ENCODE measurements at regions of chr15 and their contacts with region 1.

Region 1: DNA sequence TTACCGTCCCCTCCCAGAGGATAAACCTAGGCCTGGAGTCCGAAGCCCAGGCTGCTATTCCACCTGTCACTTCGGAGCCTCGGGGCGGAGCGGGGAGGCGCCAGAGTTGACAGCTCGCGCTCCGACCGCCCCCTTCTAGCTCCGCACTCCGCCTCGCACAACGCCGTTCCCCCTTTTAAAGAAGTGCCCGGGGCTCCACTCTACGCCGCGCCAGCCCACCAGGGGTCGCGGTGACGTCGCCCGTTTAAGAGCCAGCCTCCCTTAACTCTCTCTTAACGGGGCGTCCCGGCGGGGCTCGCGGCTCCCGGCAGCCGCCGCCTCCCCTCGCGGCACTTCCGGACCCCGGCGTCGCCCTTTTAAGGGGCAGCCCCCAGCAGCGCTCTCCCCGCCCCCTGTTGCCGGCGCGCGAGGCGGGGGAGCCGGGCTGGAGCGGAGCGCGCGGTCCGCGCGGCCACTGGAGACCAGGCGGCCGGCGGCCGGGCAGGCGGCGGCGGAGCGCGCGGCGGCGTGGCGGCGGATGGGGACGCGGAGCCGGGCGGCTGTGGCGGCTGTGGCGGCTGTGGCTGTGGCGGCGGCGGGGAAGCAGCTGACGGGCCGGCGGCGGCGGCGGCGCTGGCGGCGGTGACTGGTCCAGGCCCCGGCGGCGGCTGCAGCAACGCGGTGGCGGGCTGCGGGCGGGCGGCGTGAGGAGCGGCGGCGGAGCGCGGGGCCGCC is at the start of gene INAFM2:
- DNase-seq: peak; percentile 90
- H3K4me3 ChIP-seq: peak within 1 kb of the TSS; percentile 61 to 77 (median 64)
- H3K27ac ChIP-seq: no peak within 1 kb of the TSS
- H3K4me1 ChIP-seq: peaks cover 46% of the 10 kb centered on the region
- H3K27me3 ChIP-seq: no peaks in the 10 kb centered on the region
- CTCF ChIP-seq: peak; percentile 6 to 34
- total RNA-seq, gene INAFM2: 25.5 to 28.0 TPM

Region 2: DNA sequence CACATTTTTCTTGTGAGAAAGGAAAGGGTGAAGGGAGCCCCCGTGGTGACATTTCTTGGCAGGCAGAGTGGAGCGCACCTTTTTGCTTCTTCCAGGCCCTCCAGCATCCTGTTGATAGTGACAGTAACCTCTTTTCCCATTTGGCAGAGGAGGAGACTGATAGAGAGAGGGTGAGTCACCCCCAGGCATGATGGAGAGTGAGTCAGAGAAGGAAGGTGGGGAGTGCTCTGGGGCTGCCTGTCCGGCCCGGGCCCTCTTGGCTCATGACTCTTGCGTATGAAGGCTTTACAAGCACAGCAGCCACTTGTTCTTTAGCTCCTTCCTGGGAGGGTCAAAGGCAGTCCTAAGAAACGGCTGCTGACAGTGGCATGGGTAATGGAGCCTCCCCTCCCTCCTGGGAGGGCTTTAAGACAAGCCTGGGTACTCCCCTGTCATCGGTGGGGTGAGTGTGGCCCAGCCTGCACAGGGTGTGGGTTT is 56.5 kb before region 1 on chr15:
- CTCF ChIA-PET with region 1: no interaction called
- dilution Hi-C with region 1: loop called (anchors 5 kb)
- in situ Hi-C with region 1: no loop called
- intact Hi-C with region 1: no loop called
- DNase-seq: peak; percentile 96
- H3K4me3 ChIP-seq: no peak overlapping the region
- H3K27ac ChIP-seq: no peak overlapping the region
- H3K4me1 ChIP-seq: peaks cover 11% of the 10 kb centered on the region
- H3K27me3 ChIP-seq: no peaks in the 10 kb centered on the region
- CTCF ChIP-seq: no peak

Region 3: DNA sequence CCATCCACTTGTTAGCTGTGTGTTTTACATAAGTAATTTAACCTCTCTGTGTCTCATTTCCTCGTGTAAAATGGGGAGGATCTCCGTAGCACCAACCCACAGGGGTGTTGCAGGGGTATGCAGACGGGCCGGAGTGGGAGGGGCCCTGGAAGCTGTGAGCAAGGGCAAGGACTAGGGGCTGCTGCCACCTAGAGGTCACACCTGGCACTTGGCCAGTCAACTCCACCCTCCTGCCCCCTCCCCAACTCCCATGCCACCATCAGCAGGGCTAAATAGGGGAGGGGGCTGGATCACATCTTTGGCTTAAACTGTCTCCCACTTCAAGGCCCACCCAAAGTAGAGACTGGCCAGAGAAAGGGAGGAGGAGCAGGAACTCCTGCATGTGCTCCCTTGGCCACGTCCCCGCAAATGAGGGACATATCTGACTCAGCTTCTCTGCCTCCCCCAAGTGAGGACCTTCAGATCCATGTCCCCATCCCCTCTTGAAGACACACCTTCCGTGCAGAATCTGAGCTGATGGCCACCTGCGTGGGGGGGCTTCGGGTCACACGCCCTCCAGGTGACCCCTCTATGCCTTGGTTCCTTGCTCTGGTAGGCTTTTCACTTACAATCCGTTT is 14.8 kb after region 1 on chr15:
- CTCF ChIA-PET with region 1: interaction called, 4 read pairs
- dilution Hi-C with region 1: no loop called
- in situ Hi-C with region 1: no loop called
- intact Hi-C with region 1: loop called (anchors 1 kb)
- DNase-seq: peak; percentile 66
- H3K4me3 ChIP-seq: peak overlapping the region in 2 of 3 experiments; percentile 1 to 81
- H3K27ac ChIP-seq: peak overlapping the region; percentile 68
- H3K4me1 ChIP-seq: peaks cover 75% of the 10 kb centered on the region
- H3K27me3 ChIP-seq: no peaks in the 10 kb centered on the region
- CTCF ChIP-seq: peak; percentile 63 to 86

Region 4: GRCh38 chr15:40367686-40368611 is 44.6 kb after region 1 on chr15:
- CTCF ChIA-PET with region 1: no interaction called
- dilution Hi-C with region 1: no loop called
- in situ Hi-C with region 1: no loop called
- intact Hi-C with region 1: loop called (anchors 1 kb)
- DNase-seq: peak; percentile 88
- H3K4me3 ChIP-seq: no peak overlapping the region
- H3K27ac ChIP-seq: no peak overlapping the region
- H3K4me1 ChIP-seq: peaks cover 19% of the 10 kb centered on the region
- H3K27me3 ChIP-seq: no peaks in the 10 kb centered on the region
- CTCF ChIP-seq: peak; percentile 60 to 64

Region 5: DNA sequence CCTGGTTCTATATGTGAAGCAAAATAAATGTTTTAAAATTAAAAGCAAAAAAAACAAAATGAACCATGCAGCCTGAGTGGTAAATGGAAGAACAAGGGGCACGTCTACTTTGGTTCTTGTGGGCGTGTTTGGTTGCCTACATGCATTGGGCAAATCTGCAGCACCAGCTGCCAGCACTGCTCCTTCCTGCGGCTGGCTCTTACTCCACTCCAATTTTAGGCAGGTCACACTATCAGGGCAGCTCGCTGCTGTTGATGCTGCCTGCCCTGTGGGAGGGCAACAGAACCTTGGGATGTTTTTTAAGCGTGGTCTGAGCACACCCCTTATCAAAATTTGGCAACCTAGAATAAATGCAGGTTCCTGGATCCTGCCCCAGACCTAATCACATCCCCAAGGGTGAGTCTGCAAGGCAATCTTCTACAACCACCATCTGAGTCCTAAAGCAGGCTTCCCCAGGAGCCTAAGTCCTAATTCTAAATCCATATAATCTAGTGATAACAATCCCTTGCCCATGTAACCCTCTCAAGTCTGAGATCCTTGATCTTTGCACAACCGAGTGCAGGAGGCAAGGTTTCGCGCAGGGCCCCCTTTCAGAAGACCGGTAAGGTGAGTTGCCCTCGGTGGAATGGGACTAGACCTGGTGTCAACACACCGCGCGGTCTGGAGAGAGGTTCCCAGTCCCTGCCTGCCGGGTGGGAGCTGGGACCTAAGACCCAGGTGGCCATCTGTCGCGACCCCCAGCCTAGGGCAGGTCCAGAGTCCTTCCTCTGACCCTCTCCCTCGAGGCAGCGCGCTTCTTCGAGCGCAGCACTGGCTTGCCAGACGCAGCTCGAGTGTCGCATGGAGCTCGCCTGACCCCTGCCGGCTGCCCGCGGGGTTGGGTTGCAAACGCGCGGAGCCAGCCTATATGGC is 98.1 kb after region 1 on chr15:
- CTCF ChIA-PET with region 1: no interaction called
- dilution Hi-C with region 1: no loop called
- in situ Hi-C with region 1: no loop called
- intact Hi-C with region 1: loop called (anchors 1 kb)
- DNase-seq: peak; percentile 57
- H3K4me3 ChIP-seq: peak overlapping the region in 1 of 3 experiments; percentile 24
- H3K27ac ChIP-seq: no peak overlapping the region
- H3K4me1 ChIP-seq: peaks cover 22% of the 10 kb centered on the region
- H3K27me3 ChIP-seq: no peaks in the 10 kb centered on the region
- CTCF ChIP-seq: peak; percentile 76 to 96

Measured in mammary epithelial cell (primary cell).